Tibial artery (tissue), 4 donors: ENCODE measurements at regions of chr12 and their contacts with region 1.

Region 1: GRCh38 chr12:106234449-106234848 is 13.4 kb downstream of the CKAP4 start:
- DNase-seq: no peak
- H3K4me3 ChIP-seq: no peak overlapping the region
- H3K27ac ChIP-seq: no peak overlapping the region
- H3K4me1 ChIP-seq: no peaks in the 10 kb centered on the region
- H3K27me3 ChIP-seq: no peaks in the 10 kb centered on the region
- CTCF ChIP-seq: no peak

Region 2: GRCh38 chr12:106357549-106358395 is 123.3 kb after region 1 on chr12 and contains the start of gene POLR3B:
- intact Hi-C with region 1: loop called (anchors 5 kb)
- DNase-seq: peak; percentile 96 to 98
- H3K4me3 ChIP-seq: peak within 1 kb of the TSS; percentile 69 to 87
- H3K27ac ChIP-seq: peak within 1 kb of the TSS; percentile 87 to 88
- H3K4me1 ChIP-seq: peaks cover 0 to 19% (median 10%) of the 10 kb centered on the region in 4 donors
- H3K27me3 ChIP-seq: no peaks in the 10 kb centered on the region
- CTCF ChIP-seq: peak; percentile 85 to 87

Region 3: DNA sequence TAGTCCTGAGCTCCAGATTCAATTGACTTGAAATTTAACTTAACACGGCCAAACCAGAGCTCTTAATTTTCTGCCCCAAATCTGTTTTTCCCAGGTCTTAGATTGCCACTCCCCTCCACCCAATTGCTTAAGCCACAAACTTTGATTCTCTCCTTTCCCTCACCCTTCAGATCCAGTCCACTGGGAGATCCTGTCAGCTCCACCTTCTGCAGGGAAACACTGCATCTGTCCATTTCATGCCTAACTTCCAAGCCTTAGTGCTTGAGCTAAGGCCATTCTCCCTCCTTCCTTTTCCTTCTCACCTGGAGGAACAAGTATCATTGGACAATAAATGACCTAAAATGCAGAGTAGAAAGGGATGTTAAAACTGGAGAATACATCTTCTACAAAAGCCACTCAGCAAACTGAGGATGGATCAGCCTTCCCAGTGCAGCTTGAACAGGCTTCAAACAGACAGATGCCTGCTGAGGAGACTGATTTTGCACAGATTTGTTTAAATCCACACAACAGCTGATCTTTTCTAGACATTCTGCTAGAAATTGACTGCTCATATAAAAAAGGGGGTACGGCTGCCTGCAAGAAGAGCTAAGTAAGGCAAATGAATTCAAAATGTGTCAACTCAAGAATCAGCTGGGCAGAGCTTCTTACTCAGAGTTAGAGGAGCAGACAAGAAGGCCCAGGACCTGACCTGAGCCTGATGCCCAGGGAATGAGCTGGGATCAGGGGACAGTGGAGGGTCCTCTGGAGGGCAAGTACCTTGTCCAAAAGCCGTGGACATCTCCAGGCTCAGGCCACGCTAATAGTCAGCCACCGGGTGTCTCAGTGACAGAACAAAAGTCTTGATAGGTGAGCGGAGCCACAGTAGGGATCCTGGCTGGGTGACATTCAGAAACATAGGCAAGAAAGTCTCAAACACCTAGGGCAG is 458.7 kb after region 1 on chr12:
- intact Hi-C with region 1: no loop called
- DNase-seq: no peak
- H3K4me3 ChIP-seq: no peak overlapping the region
- H3K27ac ChIP-seq: no peak overlapping the region
- H3K4me1 ChIP-seq: no peaks in the 10 kb centered on the region
- H3K27me3 ChIP-seq: no peaks in the 10 kb centered on the region
- CTCF ChIP-seq: no peak